Activated CD4-positive, alpha-beta memory T cell treated with anti-CD3 and anti-CD28 coated beads, Interleukin-2, amount 10 ng/mL, durations not matched to agents 7 days and 5 days (primary cell): ENCODE measurements at regions of chr17 and their contacts with region 1.

Region 1: DNA sequence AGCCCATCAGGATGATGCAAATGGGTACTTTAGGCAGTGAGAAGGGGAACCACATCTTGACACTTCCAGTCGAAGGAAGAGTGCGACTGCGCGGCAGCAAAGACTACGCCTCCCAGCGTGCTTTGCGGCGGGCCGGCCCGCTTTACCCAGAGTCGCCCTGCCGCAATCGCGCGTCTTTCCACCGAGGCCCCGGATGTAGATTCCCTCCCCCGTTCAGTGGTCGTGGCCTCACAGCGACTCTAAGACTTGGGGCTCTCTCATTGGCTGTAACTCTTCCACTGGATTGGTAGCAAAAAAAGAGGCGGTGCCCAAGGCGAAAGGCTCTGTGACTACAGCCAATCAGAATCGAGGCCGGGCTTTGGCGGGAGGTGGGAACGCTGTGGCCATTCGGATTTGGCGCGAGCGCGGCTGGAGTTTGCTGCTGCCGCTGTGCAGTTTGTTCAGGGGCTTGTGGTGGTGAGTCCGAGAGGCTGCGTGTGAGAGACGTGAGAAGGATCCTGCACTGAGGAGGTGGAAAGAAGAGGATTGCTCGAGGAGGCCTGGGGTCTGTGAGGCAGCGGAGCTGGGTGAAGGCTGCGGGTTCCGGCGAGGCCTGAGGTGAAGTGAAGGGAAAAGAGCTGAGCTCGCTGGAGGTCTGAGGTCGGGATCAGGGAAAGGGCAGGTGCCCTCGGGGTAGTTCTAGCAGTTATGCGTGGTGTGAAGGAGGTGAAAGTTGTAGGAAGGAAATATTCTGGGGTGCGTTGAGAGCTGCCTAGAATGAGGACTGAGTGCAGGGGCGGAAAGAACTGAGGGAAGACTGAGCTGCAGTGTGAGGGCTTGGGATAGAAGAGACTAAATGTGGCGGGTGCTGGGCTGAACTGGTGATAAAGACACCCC is at the start of gene CDC6:
- DNase-seq: peak; percentile 99
- H3K4me3 Mint-ChIP-seq: peak within 1 kb of the TSS; percentile 99
- H3K27ac Mint-ChIP-seq: peak within 1 kb of the TSS; percentile 97
- H3K4me1 Mint-ChIP-seq: peaks cover 60% of the 10 kb centered on the region
- H3K27me3 Mint-ChIP-seq: no peaks in the 10 kb centered on the region
- total RNA-seq, gene CDC6: 67.5 to 69.9 TPM

Region 2: DNA sequence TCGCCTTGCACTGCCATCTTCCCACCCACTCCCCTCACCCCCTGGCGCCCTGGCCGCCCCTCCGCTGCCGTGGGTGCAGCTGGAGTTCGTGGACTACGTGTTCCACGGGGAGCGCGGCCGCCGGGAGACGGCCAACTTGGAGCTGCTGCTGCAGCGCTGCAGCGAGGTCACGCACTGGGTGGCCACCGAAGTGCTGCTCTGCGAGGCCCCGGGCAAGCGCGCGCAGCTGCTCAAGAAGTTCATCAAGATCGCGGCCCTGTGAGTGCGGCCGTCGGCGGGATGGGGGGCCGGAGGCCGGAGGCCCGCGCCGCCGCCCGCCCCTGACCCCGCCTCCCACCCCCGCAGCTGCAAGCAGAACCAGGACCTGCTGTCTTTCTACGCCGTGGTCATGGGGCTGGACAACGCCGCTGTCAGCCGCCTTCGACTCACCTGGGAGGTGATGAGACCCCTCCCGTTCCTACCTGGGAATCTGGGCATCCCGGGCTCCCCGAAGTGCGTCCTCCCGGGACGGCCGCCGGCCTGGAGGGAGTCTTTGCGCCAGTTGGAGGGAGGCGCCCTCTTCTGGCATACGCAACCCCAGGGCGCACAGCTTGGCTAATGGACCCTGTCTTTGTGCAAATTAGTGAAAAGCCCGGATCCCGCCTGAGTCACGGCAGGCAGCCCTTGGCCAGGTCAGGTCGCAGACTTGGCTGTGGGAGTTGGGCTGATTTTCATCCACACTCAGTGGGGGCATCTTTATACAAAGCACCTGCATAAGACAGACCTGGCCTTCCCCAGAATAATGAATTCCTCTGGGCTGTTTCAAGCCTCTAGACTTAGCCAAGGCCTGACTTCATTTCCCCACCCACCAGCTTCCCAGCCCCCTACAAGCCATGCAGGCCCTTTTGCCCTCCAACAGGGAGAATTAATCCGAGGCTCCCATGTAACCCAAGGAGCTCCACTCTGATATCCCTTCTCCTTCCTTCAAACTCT is 96.2 kb before region 1 on chr17:
- CTCF ChIA-PET with region 1: interaction called, 11 read pairs
- POLR2A ChIA-PET with region 1: interaction called, 10 read pairs
- DNase-seq: peak; percentile 75
- H3K4me3 Mint-ChIP-seq: peak overlapping the region; percentile 94
- H3K27ac Mint-ChIP-seq: no peak overlapping the region
- H3K4me1 Mint-ChIP-seq: peaks cover 15% of the 10 kb centered on the region
- H3K27me3 Mint-ChIP-seq: peaks cover 2% of the 10 kb centered on the region

Region 3: GRCh38 chr17:40219073-40219860 is 68.5 kb before region 1 on chr17 and contains the start of gene WIPF2:
- CTCF ChIA-PET with region 1: interaction called, 16 read pairs
- POLR2A ChIA-PET with region 1: interaction called, 21 read pairs
- DNase-seq: peak; percentile 97
- H3K4me3 Mint-ChIP-seq: peak within 1 kb of the TSS; percentile 90
- H3K27ac Mint-ChIP-seq: peak within 1 kb of the TSS; percentile 100
- H3K4me1 Mint-ChIP-seq: peaks cover 32% of the 10 kb centered on the region
- H3K27me3 Mint-ChIP-seq: no peaks in the 10 kb centered on the region
- total RNA-seq, gene WIPF2: 26.0 TPM

Region 4: DNA sequence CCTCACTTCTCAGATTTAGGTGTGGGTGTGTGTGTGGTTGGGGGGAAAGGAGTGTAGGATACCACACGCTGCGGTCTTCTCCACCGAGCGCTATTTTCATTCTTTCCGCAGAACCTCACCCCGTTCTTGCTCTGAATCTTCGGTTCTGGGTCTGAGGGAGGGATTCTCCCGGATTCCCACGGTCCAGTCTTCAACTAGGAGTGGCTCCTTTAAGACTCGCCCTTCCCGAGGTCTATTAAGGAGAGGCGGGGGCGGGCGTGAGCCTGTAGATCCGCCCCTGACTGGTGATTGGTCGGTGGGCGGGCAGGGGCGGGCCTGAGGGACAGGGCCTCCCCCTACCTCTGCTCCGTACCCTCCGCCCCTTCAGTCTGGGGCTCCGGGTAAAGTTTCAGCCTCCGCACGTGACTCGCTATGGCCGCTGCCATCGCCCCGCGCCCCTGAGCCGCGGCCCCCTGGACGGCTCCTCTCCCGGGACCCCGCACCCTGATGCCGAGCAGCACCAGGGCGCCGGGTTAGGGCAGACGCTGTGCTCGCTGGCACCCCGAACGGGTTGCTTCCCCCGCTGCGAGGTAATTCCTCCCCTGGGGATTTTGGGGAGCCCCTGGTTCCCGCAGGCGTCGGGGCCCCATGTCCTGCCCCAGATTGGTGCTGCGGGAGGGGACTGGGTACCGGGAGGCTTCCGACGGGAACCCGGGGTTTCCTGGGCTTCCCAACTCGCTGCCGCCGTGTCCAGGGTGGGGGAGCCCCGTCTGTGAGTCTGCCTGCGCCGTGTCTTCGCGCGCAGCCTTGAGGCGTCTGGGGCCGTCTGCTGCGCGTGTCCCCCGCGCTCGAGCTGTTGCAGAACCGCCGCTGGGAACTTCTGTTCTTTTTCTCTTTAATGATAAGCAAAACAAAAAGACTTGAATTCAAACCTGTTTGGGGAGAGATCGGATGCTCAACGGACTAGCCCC is 30.4 kb after region 1 on chr17:
- CTCF ChIA-PET with region 1: interaction called, 14 read pairs
- POLR2A ChIA-PET with region 1: interaction called, 36 read pairs
- DNase-seq: peak; percentile 94
- H3K4me3 Mint-ChIP-seq: peak overlapping the region; percentile 90
- H3K27ac Mint-ChIP-seq: peak overlapping the region; percentile 93
- H3K4me1 Mint-ChIP-seq: peaks cover 76% of the 10 kb centered on the region
- H3K27me3 Mint-ChIP-seq: no peaks in the 10 kb centered on the region

Region 5: DNA sequence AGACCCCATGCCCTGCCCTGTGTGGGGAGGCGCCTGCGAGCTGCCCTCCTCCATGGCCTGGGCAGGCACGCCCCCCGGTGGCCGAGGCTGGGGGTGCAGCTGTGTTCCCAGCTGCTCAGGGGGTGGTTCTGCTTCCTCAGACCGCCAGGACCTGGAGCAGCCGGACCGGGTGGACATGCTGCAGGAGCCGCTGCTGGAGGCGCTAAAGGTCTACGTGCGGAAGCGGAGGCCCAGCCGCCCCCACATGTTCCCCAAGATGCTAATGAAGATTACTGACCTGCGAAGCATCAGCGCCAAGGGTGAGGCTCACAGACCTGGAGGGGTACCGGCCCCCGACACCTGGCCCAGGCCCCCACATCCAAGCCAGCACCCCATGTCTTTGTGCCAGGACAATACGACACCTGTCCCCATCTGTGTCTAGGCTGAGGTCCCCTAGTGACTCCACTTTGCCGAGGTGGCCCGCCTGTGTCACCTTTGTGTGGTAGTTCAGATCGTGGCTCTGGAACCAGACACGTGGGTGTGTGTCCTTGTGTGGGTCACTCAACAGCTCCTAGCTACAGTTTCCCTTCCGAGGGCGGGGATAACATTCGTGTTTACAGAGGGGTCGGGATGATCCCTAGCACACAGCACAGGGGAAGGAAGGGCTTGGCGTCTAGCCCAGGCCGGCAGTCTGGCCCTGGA is 67.5 kb after region 1 on chr17:
- CTCF ChIA-PET with region 1: interaction called, 20 read pairs
- POLR2A ChIA-PET with region 1: no interaction called
- DNase-seq: peak; percentile 76
- H3K4me3 Mint-ChIP-seq: no peak overlapping the region
- H3K27ac Mint-ChIP-seq: peak overlapping the region; percentile 21
- H3K4me1 Mint-ChIP-seq: peaks cover 23% of the 10 kb centered on the region
- H3K27me3 Mint-ChIP-seq: peaks cover 4% of the 10 kb centered on the region

Region 6: DNA sequence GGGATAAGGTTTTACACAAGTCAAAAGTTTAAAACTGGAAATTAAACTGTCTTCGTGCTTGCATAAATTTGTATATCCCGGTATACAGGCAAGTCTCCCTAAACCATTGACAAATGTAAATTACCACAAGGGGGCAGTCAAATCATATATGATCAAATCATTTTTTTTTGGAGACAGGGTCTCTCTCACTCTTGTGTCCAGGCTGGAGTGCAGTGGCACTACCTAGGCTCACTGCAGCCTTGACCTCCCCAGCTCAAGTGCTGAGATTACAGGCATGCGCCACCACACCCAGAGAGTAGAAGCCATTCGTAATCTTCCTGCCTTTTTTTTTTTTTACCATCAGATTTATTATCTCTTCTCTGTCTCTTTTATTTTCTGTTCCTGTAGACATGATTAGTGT is 111.5 kb after region 1 on chr17:
- CTCF ChIA-PET with region 1: no interaction called
- POLR2A ChIA-PET with region 1: no interaction called
- DNase-seq: no peak
- H3K4me3 Mint-ChIP-seq: no peak overlapping the region
- H3K27ac Mint-ChIP-seq: no peak overlapping the region
- H3K4me1 Mint-ChIP-seq: peaks cover 25% of the 10 kb centered on the region
- H3K27me3 Mint-ChIP-seq: no peaks in the 10 kb centered on the region